Naive thymus-derived CD4-positive, alpha-beta T cell (primary cell): ENCODE measurements at regions of chr10 and their contacts with region 1.

Region 1: GRCh38 chr10:93288654-93289634 is 193.2 kb downstream of the MYOF start:
- DNase-seq: peak in 8 of 9 donors; percentile 11 to 57 (median 40)
- ATAC-seq: peak; percentile 65
- H3K4me3 ChIP-seq: no peak overlapping the region
- H3K4me3 Mint-ChIP-seq: no peak overlapping the region
- H3K27ac ChIP-seq: no peak overlapping the region
- H3K27ac Mint-ChIP-seq: peak overlapping the region in 1 of 9 donors; percentile 12
- H3K4me1 ChIP-seq: no peaks in the 10 kb centered on the region
- H3K4me1 Mint-ChIP-seq: peaks cover 0 to 2% (median 0%) of the 10 kb centered on the region in 7 donors
- H3K27me3 ChIP-seq: no peaks in the 10 kb centered on the region
- H3K27me3 Mint-ChIP-seq: peaks cover 0 to 6% (median 3%) of the 10 kb centered on the region in 5 donors

Region 2: DNA sequence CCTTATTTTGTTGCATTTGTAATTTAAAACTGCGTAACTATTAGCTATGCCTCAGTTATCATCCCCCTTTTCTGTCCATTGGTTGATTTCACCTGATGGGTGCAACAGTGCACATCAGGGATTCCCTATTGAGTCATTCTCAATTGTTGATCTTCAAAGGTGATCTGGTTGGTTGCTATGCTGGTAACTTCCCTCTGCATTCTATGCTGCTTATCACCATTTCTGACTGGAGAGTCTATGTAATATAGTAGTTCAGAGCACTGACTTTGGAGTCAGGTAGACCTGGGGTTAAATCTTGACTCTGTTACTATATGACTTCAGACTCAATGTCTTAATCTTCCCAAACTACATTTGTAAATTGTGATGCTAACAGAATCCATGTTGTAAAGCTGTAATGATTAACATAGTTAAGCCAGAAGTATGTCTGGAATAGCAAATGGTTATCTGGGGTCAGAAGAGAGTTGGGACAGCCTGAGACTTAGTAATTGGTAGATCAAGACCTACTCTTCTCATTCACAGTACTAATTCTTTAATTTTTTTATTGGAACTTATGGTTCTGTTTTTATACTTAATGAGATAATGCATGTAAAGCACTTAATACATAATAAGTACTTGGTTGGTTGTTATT is 402.5 kb before region 1 on chr10:
- CTCF ChIA-PET with region 1: no interaction called
- POLR2A ChIA-PET with region 1: no interaction called
- intact Hi-C with region 1: loop called in 1 of 2 experiments (anchors 2 kb)
- DNase-seq: no peak
- ATAC-seq: no peak
- H3K4me3 ChIP-seq: no peak overlapping the region
- H3K4me3 Mint-ChIP-seq: no peak overlapping the region
- H3K27ac ChIP-seq: no peak overlapping the region
- H3K27ac Mint-ChIP-seq: no peak overlapping the region
- H3K4me1 ChIP-seq: no peaks in the 10 kb centered on the region
- H3K4me1 Mint-ChIP-seq: peaks cover 0 to 13% (median 8%) of the 10 kb centered on the region in 7 donors
- H3K27me3 ChIP-seq: no peaks in the 10 kb centered on the region
- H3K27me3 Mint-ChIP-seq: peaks cover 0 to 2% (median 0%) of the 10 kb centered on the region in 5 donors

Region 3: GRCh38 chr10:92965314-92965713 is 323.6 kb before region 1 on chr10:
- CTCF ChIA-PET with region 1: no interaction called
- POLR2A ChIA-PET with region 1: no interaction called
- intact Hi-C with region 1: loop called in 1 of 2 experiments (anchors 5 kb)
- DNase-seq: peak in 5 of 9 donors; percentile 8 to 26 (median 14)
- ATAC-seq: no peak
- H3K4me3 ChIP-seq: no peak overlapping the region
- H3K4me3 Mint-ChIP-seq: no peak overlapping the region
- H3K27ac ChIP-seq: no peak overlapping the region
- H3K27ac Mint-ChIP-seq: no peak overlapping the region
- H3K4me1 ChIP-seq: no peaks in the 10 kb centered on the region
- H3K4me1 Mint-ChIP-seq: peaks cover 0 to 2% (median 0%) of the 10 kb centered on the region in 7 donors
- H3K27me3 ChIP-seq: no peaks in the 10 kb centered on the region
- H3K27me3 Mint-ChIP-seq: no peaks in the 10 kb centered on the region

Region 4: DNA sequence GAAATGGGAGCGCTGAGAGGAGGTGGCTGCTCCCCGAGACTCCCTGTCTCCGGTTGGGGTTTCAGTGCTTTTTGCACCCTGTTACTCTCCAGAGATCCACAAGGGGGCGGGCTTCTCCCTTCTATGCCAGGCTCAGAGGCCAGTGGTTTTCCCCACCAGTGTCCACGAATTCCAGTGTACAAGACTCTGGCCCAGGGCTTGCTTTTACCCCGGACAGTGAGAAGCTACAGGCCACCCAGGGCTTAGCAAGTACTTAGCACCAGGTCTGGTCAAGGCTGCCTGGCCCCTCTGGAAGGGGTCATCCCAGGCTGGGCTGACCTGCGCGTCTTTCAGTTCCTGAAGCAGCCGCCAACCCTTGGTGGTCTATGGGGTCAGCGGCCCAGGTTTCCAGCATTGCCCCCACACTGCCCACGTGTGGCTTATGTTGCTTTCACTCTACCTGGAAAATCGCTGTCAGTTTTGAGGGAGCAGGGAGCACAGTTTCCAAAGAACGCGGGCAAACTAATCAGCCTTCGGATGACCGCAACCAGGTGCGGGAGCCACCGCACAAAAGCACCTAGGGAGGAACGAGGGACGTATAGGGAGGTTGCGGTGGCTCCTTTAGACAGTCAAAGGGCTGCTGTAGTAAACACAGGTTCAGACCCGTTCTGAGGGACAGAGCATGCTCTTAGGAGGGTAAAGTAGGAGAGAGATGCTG is 208.4 kb before region 1 on chr10:
- CTCF ChIA-PET with region 1: interaction called, 3 read pairs
- POLR2A ChIA-PET with region 1: no interaction called
- intact Hi-C with region 1: loop called in 1 of 2 experiments (anchors 1 kb)
- DNase-seq: peak in 8 of 9 donors; percentile 18 to 57 (median 44)
- ATAC-seq: peak; percentile 81
- H3K4me3 ChIP-seq: no peak overlapping the region
- H3K4me3 Mint-ChIP-seq: peak overlapping the region in 4 of 10 donors; percentile 2 to 70 (median 44)
- H3K27ac ChIP-seq: no peak overlapping the region
- H3K27ac Mint-ChIP-seq: no peak overlapping the region
- H3K4me1 ChIP-seq: no peaks in the 10 kb centered on the region
- H3K4me1 Mint-ChIP-seq: peaks cover 4 to 8% (median 7%) of the 10 kb centered on the region in 7 donors
- H3K27me3 ChIP-seq: no peaks in the 10 kb centered on the region
- H3K27me3 Mint-ChIP-seq: peaks cover 39 to 51% (median 45%) of the 10 kb centered on the region in 5 donors

Region 5: GRCh38 chr10:93115661-93116383 is 173.1 kb before region 1 on chr10:
- CTCF ChIA-PET with region 1: interaction called, 4 read pairs
- POLR2A ChIA-PET with region 1: no interaction called
- intact Hi-C with region 1: loop called (anchors 1 kb)
- DNase-seq: peak; percentile 51 to 77 (median 69)
- ATAC-seq: peak; percentile 82
- H3K4me3 ChIP-seq: no peak overlapping the region
- H3K4me3 Mint-ChIP-seq: peak overlapping the region in 5 of 10 donors; percentile 21 to 57 (median 41)
- H3K27ac ChIP-seq: no peak overlapping the region
- H3K27ac Mint-ChIP-seq: peak overlapping the region in 8 of 9 donors; percentile 12 to 80 (median 44)
- H3K4me1 ChIP-seq: peaks cover 4 to 15% of the 10 kb centered on the region in 2 donors
- H3K4me1 Mint-ChIP-seq: peaks cover 0 to 50% (median 17%) of the 10 kb centered on the region in 7 donors
- H3K27me3 ChIP-seq: no peaks in the 10 kb centered on the region
- H3K27me3 Mint-ChIP-seq: peaks cover 0 to 27% (median 9%) of the 10 kb centered on the region in 5 donors

Region 6: DNA sequence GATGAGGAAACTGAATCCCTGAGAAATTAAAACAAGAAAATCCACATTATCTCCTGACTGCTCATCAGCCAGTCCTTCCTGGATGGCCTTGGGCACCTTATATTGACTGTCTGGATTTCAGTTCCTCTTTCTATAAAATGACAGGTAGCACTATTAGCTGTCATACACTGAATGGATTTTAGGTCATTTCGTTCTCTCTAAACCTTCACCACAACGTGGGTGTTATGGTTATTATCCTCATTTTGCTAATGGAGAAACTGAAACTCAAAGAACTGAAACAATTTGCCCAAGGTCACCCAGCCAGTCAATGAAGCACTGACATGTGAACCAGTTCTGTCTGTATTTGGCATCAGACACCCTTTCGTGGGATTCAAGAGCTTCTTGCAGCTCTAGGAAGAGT is 21.4 kb before region 1 on chr10:
- CTCF ChIA-PET with region 1: no interaction called
- POLR2A ChIA-PET with region 1: no interaction called
- intact Hi-C with region 1: no loop called
- DNase-seq: no peak
- ATAC-seq: no peak
- H3K4me3 ChIP-seq: no peak overlapping the region
- H3K4me3 Mint-ChIP-seq: no peak overlapping the region
- H3K27ac ChIP-seq: no peak overlapping the region
- H3K27ac Mint-ChIP-seq: no peak overlapping the region
- H3K4me1 ChIP-seq: no peaks in the 10 kb centered on the region
- H3K4me1 Mint-ChIP-seq: peaks cover 0 to 7% (median 0%) of the 10 kb centered on the region in 7 donors
- H3K27me3 ChIP-seq: no peaks in the 10 kb centered on the region
- H3K27me3 Mint-ChIP-seq: no peaks in the 10 kb centered on the region